ENCODE measurements at regions of chr19 and their contacts with region 1.

Region 1: GRCh38 chr19:39445265-39446111 is at the start of gene SUPT5H:
- DNase-seq: peak; percentile 99
- H3K4me3 ChIP-seq: peak within 1 kb of the TSS; percentile 60 to 96 (median 95)
- H3K27ac ChIP-seq: peak within 1 kb of the TSS; percentile 91 to 95 (median 94)
- H3K4me1 ChIP-seq: peaks cover 0 to 41% (median 37%) of the 10 kb centered on the region in 4 donors
- H3K27me3 ChIP-seq: no peaks in the 10 kb centered on the region
- CTCF ChIP-seq: no peak
- EP300 ChIP-seq: peak in 2 of 4 donors; percentile 14 to 17
- POLR2A ChIP-seq: peak; percentile 95 to 96
- total RNA-seq, gene SUPT5H: 72.1 to 104 (median 89.1) TPM

Region 2: GRCh38 chr19:39390755-39391592 is 54.5 kb before region 1 on chr19 and contains the starts of genes MED29 and PAF1:
- intact Hi-C with region 1: loop called (anchors 2 kb)
- DNase-seq: peak; percentile 99
- H3K4me3 ChIP-seq: peak within 1 kb of the TSS; percentile 71 to 98 (median 98)
- H3K27ac ChIP-seq: peak within 1 kb of the TSS; percentile 99 to 100 (median 100)
- H3K4me1 ChIP-seq: peaks cover 0 to 26% (median 26%) of the 10 kb centered on the region in 4 donors
- H3K27me3 ChIP-seq: no peaks in the 10 kb centered on the region
- CTCF ChIP-seq: no peak
- EP300 ChIP-seq: peak in 1 of 4 donors; percentile 2
- POLR2A ChIP-seq: peak; percentile 88 to 89
- total RNA-seq, gene MED29: 25.2 to 44.6 (median 33.7) TPM
- total RNA-seq, gene PAF1: 37.5 to 51.8 (median 43.5) TPM

Region 3: DNA sequence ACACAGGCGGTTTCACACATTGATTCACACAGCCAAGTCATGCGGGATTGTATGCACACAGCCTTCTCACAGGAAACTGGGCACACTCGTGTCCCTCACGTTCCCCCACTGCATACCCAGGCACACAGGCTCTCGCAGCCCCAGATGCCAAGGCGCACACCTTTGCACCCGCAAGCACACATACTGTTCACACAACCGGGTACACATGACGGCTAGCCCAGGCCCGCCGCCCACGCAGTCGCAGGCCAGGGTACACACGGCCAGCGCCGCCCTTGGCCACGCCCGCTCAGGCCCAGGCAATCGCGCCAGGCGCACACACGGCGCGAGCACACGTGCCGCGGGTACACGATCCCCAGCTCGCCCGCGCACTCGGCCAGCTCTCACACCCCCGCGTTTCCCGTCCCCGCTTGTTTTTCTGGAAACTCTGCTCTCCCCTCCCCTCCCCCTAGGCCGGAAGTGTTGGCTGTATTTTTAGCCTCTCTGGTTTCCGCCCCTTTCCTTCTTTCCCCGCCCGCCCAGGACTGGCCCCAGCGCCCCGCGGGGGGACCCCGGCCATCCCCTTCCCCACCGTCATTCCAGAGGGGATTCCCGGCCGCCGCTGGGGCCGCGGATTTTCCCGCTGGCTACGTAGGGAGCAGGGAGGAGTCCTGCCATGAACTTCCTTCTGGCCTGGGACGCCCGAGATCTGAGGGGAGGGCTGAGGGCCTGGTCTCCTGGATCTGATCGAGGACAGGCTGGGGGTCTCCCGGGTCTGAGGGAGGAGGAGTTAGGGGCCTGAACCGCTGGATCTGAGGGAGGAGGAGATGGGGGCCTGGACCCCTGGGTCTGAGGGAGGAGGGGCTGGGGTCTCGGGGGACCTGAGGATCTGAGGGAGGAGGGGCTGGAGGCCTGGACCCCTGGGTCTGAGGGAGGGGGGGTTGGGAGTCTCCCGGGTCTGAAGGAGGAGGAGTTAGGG is 42.9 kb before region 1 on chr19:
- intact Hi-C with region 1: no loop called
- DNase-seq: peak; percentile 97
- H3K4me3 ChIP-seq: peak overlapping the region; percentile 50 to 61 (median 59)
- H3K27ac ChIP-seq: peak overlapping the region; percentile 100
- H3K4me1 ChIP-seq: peaks cover 0 to 67% (median 57%) of the 10 kb centered on the region in 4 donors
- H3K27me3 ChIP-seq: no peaks in the 10 kb centered on the region
- CTCF ChIP-seq: no peak
- EP300 ChIP-seq: peak in 2 of 4 donors; percentile 72 to 89
- POLR2A ChIP-seq: peak in 1 of 2 donors; percentile 43

Region 4: GRCh38 chr19:39416152-39417120 is 29.1 kb before region 1 on chr19:
- intact Hi-C with region 1: no loop called
- DNase-seq: no peak
- H3K4me3 ChIP-seq: no peak overlapping the region
- H3K27ac ChIP-seq: peak overlapping the region; percentile 12 to 100 (median 100)
- H3K4me1 ChIP-seq: peaks cover 0 to 49% (median 38%) of the 10 kb centered on the region in 4 donors
- H3K27me3 ChIP-seq: no peaks in the 10 kb centered on the region
- CTCF ChIP-seq: no peak
- EP300 ChIP-seq: no peak
- POLR2A ChIP-seq: no peak

Region 5: DNA sequence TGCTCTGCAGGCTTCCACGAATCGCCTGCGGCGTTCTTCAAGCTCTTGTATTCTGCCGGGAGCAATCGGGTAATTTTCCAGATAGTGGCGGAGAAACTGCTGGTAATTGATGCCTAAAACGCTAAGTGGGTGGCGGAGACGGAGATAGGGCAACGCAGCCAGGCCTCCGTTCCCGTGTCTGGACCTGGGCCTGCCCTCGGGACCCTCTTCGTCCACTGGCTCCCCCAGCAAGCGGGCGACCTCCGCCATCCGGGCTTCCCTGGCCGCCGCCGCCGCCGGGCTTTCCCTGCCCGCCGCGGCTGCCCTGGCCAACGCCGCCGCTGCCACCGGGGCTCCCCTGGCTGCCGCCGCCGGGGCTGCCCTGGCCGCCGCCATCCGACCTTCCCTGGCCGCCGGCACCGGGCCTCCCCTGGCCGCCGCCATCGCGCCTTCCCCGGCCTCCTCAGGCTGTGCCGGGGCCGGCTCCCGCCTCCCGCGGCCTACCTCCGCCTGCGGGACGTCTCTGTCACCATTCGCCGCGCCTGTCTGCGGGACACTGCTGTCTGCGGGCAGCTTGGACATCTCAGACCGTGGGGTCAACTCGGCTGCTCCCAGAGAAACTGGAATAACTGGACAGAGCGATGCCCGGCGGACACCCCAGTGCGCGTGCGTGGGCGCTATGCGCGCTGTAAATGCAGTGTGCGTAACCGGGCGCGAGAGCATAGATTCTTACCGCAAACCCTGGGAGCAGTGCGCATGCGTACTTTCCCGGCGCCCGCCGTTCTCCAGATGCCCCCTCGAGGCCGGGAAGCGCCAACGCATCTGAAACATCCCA is 94.2 kb after region 1 on chr19 and contains the start of gene EID2:
- intact Hi-C with region 1: loop called (anchors 2 kb)
- DNase-seq: peak; percentile 98
- H3K4me3 ChIP-seq: peak within 1 kb of the TSS; percentile 77 to 91 (median 86)
- H3K27ac ChIP-seq: peak within 1 kb of the TSS; percentile 96 to 99 (median 98)
- H3K4me1 ChIP-seq: peaks cover 0 to 30% (median 24%) of the 10 kb centered on the region in 4 donors
- H3K27me3 ChIP-seq: no peaks in the 10 kb centered on the region
- CTCF ChIP-seq: peak; percentile 77 to 80 (median 78)
- EP300 ChIP-seq: no peak
- POLR2A ChIP-seq: peak; percentile 77 to 87
- total RNA-seq, gene EID2: 9.7 to 16.4 (median 13.2) TPM